PC-9 (cell line): ENCODE measurements at regions of chr4 and their contacts with region 1.

Region 1: DNA sequence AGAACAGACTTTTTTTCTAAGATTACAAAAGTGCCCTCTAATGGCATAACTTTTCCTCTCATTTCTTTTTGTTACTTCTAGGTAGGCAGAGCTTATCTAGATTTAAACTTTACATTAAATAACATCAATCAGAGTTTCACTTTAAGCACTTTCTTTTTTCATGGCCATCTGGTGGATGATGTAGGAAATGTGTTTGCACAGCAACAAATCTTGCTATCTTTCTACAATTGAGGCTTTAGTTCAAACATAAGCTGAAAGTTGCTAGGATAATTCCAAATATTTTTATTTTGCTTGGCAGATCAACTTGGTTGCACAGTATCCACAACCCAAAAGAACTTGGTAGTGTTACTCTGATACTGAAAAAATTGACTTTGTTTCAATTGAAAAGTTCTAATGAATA is 22.0 kb downstream of the NDNF start:
- DNase-seq: no peak
- H3K4me3 ChIP-seq: no peak overlapping the region
- H3K27ac ChIP-seq: no peak overlapping the region
- H3K4me1 ChIP-seq: no peaks in the 10 kb centered on the region
- H3K27me3 ChIP-seq: no peaks in the 10 kb centered on the region
- CTCF ChIP-seq: no peak

Region 2: GRCh38 chr4:120960656-120961267 is 89.5 kb before region 1 on chr4:
- CTCF ChIA-PET with region 1: no interaction called
- POLR2A ChIA-PET with region 1: no interaction called
- intact Hi-C with region 1: no loop called
- DNase-seq: no peak
- H3K4me3 ChIP-seq: no peak overlapping the region
- H3K27ac ChIP-seq: no peak overlapping the region
- H3K4me1 ChIP-seq: no peaks in the 10 kb centered on the region
- H3K27me3 ChIP-seq: no peaks in the 10 kb centered on the region
- CTCF ChIP-seq: no peak

Region 3: GRCh38 chr4:121283319-121283718 is 233.0 kb after region 1 on chr4:
- CTCF ChIA-PET with region 1: no interaction called
- POLR2A ChIA-PET with region 1: interaction called, 11 read pairs
- intact Hi-C with region 1: no loop called
- DNase-seq: no peak
- H3K4me3 ChIP-seq: no peak overlapping the region
- H3K27ac ChIP-seq: no peak overlapping the region
- H3K4me1 ChIP-seq: no peaks in the 10 kb centered on the region
- H3K27me3 ChIP-seq: no peaks in the 10 kb centered on the region
- CTCF ChIP-seq: no peak